Colonic mucosa (tissue), 4 donors: ENCODE measurements at regions of chr11 and their contacts with region 1.

Region 1: DNA sequence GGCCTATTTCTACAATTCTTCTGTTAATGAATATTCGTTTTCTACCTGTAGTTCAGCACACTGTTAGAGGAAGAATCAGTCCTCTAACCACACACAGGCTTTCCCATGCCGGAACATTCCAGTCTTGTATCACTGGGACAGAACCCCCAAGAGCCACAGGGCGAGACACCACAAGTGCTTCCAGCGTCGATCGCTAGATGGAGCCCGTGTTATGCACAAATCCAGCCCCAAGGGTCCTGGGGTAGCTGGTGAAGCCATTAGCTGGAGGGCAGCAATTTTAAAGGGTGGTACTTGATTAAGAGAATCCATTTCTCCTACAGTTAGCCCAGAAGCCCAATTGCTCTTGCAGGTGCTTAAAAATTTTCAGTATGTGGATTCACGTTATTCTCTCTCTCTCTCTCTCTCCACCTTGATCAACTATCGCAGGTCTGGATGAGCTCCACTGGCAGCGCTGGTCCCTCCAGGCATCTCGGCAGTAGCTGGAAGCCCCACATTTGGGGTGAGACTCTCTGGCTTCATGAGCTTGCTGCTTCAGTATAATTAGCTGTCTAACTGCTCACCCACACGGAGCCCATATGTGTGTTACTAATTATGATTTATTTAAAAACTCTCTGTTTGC is 148.2 kb upstream of the SNX19 start:
- DNase-seq: peak; percentile 30
- H3K4me3 ChIP-seq: no peak overlapping the region
- H3K27ac ChIP-seq: no peak overlapping the region
- H3K4me1 ChIP-seq: no peaks in the 10 kb centered on the region
- H3K27me3 ChIP-seq: no peaks in the 10 kb centered on the region
- CTCF ChIP-seq: peak; percentile 64

Region 2: DNA sequence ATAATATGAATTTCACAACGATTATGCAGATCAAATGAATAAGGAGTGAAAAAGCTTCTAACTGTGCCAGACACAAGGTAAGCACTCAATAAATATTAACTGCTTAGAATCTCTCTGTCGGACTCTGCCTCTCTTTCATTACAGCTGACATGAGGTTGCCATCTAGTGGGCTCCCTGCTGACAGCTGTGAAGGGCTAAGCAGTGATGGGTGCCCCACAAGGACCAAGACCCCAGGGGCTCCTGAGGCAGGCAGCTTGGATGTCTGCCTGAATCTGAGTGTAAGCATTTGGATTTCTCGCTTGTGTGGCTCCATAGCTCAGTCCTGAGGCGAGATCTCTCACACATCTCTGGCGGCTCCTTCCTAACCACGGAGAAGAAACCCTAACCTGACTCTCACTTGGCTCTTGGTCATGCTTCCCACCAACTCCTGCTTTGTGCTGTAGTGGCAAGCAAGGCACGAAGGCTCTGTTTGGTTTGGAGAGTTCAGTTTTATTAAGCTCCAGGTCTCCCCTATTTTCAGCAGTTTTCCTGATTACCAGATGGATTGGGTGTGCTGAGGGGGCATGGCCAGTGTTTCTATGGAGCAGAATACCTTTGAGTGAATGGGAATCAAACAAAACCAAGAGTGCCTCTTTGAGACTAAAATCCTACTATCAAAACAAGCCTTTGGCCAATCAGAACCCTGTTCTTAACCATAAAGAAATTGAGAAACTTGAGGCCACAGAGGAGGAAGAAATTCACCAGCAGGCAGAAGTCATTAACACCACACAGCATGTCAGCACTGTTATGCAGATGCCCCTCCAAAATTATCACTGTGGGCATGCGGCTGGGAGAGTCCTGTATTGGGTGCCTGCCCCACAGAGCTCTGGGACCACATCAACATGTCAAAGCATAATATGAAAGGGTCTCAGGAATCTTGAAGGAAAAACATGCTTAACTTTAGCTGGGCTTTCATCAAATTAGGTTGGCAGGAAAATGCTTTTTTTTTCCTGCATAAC is 153.1 kb after region 1 on chr11:
- intact Hi-C with region 1: loop called (anchors 10 kb)
- DNase-seq: no peak
- H3K4me3 ChIP-seq: no peak overlapping the region
- H3K27ac ChIP-seq: no peak overlapping the region
- H3K4me1 ChIP-seq: no peaks in the 10 kb centered on the region
- H3K27me3 ChIP-seq: no peaks in the 10 kb centered on the region
- CTCF ChIP-seq: no peak

Region 3: GRCh38 chr11:131253656-131254151 is 189.2 kb after region 1 on chr11:
- intact Hi-C with region 1: no loop called
- DNase-seq: no peak
- H3K4me3 ChIP-seq: no peak overlapping the region
- H3K27ac ChIP-seq: no peak overlapping the region
- H3K4me1 ChIP-seq: no peaks in the 10 kb centered on the region
- H3K27me3 ChIP-seq: no peaks in the 10 kb centered on the region
- CTCF ChIP-seq: no peak

Region 4: DNA sequence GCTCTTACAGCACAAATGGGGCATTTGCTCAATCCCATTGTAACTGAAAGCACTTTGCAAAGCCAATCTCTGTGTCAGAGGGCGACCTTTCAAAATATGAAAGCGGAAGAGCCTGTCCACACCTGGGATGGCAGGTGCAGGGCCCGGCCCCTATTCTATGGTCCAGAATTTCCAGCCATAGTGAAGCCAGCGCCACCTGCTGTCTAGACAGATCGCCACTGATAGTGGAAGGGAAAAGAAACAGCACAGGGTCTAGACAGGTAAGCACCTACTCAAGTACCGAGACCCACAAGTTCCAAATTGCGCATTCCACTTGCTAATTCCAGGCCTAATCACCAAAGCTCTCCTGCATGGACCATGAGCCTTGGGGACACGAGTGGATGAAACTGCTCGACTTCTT is 447.3 kb after region 1 on chr11:
- intact Hi-C with region 1: loop called (anchors 2 kb)
- DNase-seq: peak; percentile 50
- H3K4me3 ChIP-seq: no peak overlapping the region
- H3K27ac ChIP-seq: no peak overlapping the region
- H3K4me1 ChIP-seq: no peaks in the 10 kb centered on the region
- H3K27me3 ChIP-seq: no peaks in the 10 kb centered on the region
- CTCF ChIP-seq: peak; percentile 37